CD4-positive, alpha-beta memory T cell (primary cell): ENCODE measurements at regions of chr7 and their contacts with region 1.

Region 1: DNA sequence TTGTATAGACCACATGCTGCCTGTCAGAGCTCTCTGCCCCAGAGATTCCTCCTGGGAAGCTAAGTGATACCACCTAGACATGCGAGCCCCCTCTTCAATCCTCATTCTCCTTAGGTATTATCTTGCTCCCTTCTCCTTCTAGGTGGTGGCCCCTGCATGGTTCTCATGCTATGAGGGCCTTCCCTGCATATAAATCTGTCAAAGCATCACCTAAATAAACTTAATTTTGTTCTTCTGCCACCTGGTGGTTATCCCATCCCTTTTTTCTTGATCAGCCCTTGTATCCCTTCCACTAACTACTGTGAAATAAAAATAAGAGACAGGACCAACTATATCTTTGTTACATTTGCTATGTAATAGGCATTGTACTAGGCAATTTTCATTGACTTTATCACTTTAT is 242.1 kb downstream of the CDC14C start:
- DNase-seq: no peak
- H3K4me3 ChIP-seq: no peak overlapping the region
- H3K4me3 Mint-ChIP-seq: no peak overlapping the region
- H3K27ac ChIP-seq: no peak overlapping the region
- H3K27ac Mint-ChIP-seq: no peak overlapping the region
- H3K4me1 ChIP-seq: no peaks in the 10 kb centered on the region
- H3K4me1 Mint-ChIP-seq: no peaks in the 10 kb centered on the region
- H3K27me3 ChIP-seq: no peaks in the 10 kb centered on the region
- H3K27me3 Mint-ChIP-seq: no peaks in the 10 kb centered on the region

Region 2: DNA sequence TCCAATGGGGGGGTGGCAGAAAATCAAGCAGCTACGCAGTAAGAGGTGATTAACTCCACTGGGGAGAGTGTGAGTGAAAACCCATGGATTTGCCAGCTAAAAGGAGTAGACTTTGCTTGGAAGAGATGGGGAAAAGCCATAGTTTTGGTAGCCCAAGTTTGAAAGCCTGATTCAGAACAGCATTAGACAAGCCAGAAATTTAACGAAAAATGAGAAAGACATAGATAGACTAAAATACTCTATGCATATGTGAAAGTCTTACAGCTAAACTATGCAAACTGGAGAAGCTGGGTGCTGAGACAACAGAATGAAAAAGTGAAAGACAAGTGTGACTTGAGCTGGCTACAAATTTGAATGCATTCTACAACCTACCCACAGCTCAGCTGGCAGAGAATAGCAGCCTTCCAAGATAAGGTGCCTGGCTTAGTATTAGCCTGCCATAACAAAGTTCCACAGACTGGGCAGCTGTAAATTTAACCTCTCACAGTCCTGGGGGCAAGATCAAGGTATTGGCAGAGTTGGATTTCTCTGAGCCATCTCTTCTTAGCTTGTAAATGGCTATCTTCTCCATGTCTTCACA is 85.5 kb before region 1 on chr7:
- CTCF ChIA-PET with region 1: no interaction called
- POLR2A ChIA-PET with region 1: no interaction called
- intact Hi-C with region 1: no loop called
- DNase-seq: no peak
- H3K4me3 ChIP-seq: no peak overlapping the region
- H3K4me3 Mint-ChIP-seq: no peak overlapping the region
- H3K27ac ChIP-seq: no peak overlapping the region
- H3K27ac Mint-ChIP-seq: no peak overlapping the region
- H3K4me1 ChIP-seq: no peaks in the 10 kb centered on the region
- H3K4me1 Mint-ChIP-seq: no peaks in the 10 kb centered on the region
- H3K27me3 ChIP-seq: no peaks in the 10 kb centered on the region
- H3K27me3 Mint-ChIP-seq: no peaks in the 10 kb centered on the region

Region 3: DNA sequence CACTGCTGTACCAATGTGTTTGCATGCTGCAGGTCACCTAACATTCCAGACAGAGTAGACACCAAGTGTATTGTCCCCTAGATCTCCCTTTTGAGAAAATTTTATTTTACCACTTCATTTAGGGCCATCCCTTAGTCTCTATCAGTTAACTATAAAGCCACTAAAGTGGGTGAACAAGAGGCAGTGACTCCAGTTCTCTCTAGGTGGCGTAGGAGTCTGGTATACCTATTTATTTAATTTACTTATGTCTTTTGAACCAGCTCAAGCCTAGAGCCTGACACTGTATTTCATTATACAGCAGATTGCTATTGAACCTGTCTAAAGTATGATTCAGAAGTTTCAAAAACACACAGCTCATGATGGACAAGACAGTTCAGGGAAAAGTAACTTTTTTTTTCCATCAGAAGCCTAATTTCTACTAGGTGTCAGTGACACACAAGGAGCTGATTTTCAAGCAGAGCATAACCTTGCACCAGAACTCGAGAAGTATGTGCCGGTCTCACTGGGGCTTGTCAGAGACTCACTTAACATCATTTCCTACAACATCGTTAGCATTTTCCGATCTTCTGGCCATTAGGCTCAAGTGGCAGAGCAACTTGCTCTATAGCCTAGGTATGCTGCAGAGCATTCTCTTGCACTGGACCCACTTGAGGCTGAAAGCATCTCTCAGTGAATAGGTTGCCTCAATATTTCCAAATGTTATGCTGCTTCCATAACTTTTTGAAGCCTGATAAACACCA is 66.7 kb before region 1 on chr7:
- CTCF ChIA-PET with region 1: no interaction called
- POLR2A ChIA-PET with region 1: no interaction called
- intact Hi-C with region 1: loop called (anchors 10 kb)
- DNase-seq: no peak
- H3K4me3 ChIP-seq: no peak overlapping the region
- H3K4me3 Mint-ChIP-seq: no peak overlapping the region
- H3K27ac ChIP-seq: no peak overlapping the region
- H3K27ac Mint-ChIP-seq: no peak overlapping the region
- H3K4me1 ChIP-seq: no peaks in the 10 kb centered on the region
- H3K4me1 Mint-ChIP-seq: peaks cover 0 to 1% (median 0%) of the 10 kb centered on the region in 4 donors
- H3K27me3 ChIP-seq: no peaks in the 10 kb centered on the region
- H3K27me3 Mint-ChIP-seq: no peaks in the 10 kb centered on the region

Region 4: GRCh38 chr7:49150486-49150885 is 16.0 kb before region 1 on chr7:
- CTCF ChIA-PET with region 1: no interaction called
- POLR2A ChIA-PET with region 1: no interaction called
- intact Hi-C with region 1: no loop called
- DNase-seq: no peak
- H3K4me3 ChIP-seq: no peak overlapping the region
- H3K4me3 Mint-ChIP-seq: no peak overlapping the region
- H3K27ac ChIP-seq: no peak overlapping the region
- H3K27ac Mint-ChIP-seq: no peak overlapping the region
- H3K4me1 ChIP-seq: no peaks in the 10 kb centered on the region
- H3K4me1 Mint-ChIP-seq: no peaks in the 10 kb centered on the region
- H3K27me3 ChIP-seq: no peaks in the 10 kb centered on the region
- H3K27me3 Mint-ChIP-seq: no peaks in the 10 kb centered on the region